ENCODE measurements at regions of chr5 and their contacts with region 1.

Region 1: GRCh38 chr5:123511648-123512605 is at the start of gene CSNK1G3:
- DNase-seq: peak; percentile 99
- H3K4me3 ChIP-seq: peak within 1 kb of the TSS; percentile 90 to 96 (median 94)
- H3K27ac ChIP-seq: peak within 1 kb of the TSS; percentile 94 to 98 (median 96)
- H3K4me1 ChIP-seq: peaks cover 7 to 48% (median 36%) of the 10 kb centered on the region in 4 donors
- H3K27me3 ChIP-seq: no peaks in the 10 kb centered on the region
- CTCF ChIP-seq: no peak
- EP300 ChIP-seq: no peak
- POLR2A ChIP-seq: peak; percentile 68
- total RNA-seq, gene CSNK1G3: 31.2 to 53.7 (median 53.1) TPM

Region 2: GRCh38 chr5:123605822-123606221 is 93.9 kb after region 1 on chr5:
- intact Hi-C with region 1: loop called (anchors 5 kb)
- DNase-seq: no peak
- H3K4me3 ChIP-seq: no peak overlapping the region
- H3K27ac ChIP-seq: no peak overlapping the region
- H3K4me1 ChIP-seq: peaks cover 0 to 6% (median 0%) of the 10 kb centered on the region in 4 donors
- H3K27me3 ChIP-seq: no peaks in the 10 kb centered on the region
- CTCF ChIP-seq: no peak
- EP300 ChIP-seq: no peak
- POLR2A ChIP-seq: no peak